Right cardiac atrium (tissue), 5 donors: ENCODE measurements at regions of chr15 and their contacts with region 1.

Region 1: GRCh38 chr15:32651229-32651837 is 9.8 kb downstream of the SCG5 start:
- DNase-seq: no peak
- ATAC-seq: peak; percentile 39 to 45
- H3K4me3 ChIP-seq: no peak overlapping the region
- H3K27ac ChIP-seq: no peak overlapping the region
- H3K4me1 ChIP-seq: no peaks in the 10 kb centered on the region
- H3K27me3 ChIP-seq: no peaks in the 10 kb centered on the region

Region 2: GRCh38 chr15:32730677-32731654 is 79.6 kb after region 1 on chr15:
- intact Hi-C with region 1: no loop called
- DNase-seq: peak; percentile 20 to 64 (median 48)
- ATAC-seq: no peak
- H3K4me3 ChIP-seq: no peak overlapping the region
- H3K27ac ChIP-seq: no peak overlapping the region
- H3K4me1 ChIP-seq: no peaks in the 10 kb centered on the region
- H3K27me3 ChIP-seq: no peaks in the 10 kb centered on the region

Region 3: GRCh38 chr15:32966512-32966911 is 315.2 kb after region 1 on chr15:
- intact Hi-C with region 1: loop called in 1 of 4 experiments (anchors 10 kb)
- DNase-seq: no peak
- ATAC-seq: no peak
- H3K4me3 ChIP-seq: no peak overlapping the region
- H3K27ac ChIP-seq: no peak overlapping the region
- H3K4me1 ChIP-seq: no peaks in the 10 kb centered on the region
- H3K27me3 ChIP-seq: no peaks in the 10 kb centered on the region

Region 4: GRCh38 chr15:32994810-32995424 is 343.6 kb after region 1 on chr15:
- intact Hi-C with region 1: loop called in 1 of 4 experiments (anchors 10 kb)
- DNase-seq: no peak
- ATAC-seq: no peak
- H3K4me3 ChIP-seq: no peak overlapping the region
- H3K27ac ChIP-seq: no peak overlapping the region
- H3K4me1 ChIP-seq: no peaks in the 10 kb centered on the region
- H3K27me3 ChIP-seq: no peaks in the 10 kb centered on the region

Region 5: GRCh38 chr15:33119273-33119672 is 467.9 kb after region 1 on chr15:
- intact Hi-C with region 1: no loop called
- DNase-seq: no peak
- ATAC-seq: no peak
- H3K4me3 ChIP-seq: no peak overlapping the region
- H3K27ac ChIP-seq: no peak overlapping the region
- H3K4me1 ChIP-seq: no peaks in the 10 kb centered on the region
- H3K27me3 ChIP-seq: no peaks in the 10 kb centered on the region